Sciatic nerve (tissue), 2 donors: ENCODE measurements at regions of chr22 and their contacts with region 1.

Region 1: DNA sequence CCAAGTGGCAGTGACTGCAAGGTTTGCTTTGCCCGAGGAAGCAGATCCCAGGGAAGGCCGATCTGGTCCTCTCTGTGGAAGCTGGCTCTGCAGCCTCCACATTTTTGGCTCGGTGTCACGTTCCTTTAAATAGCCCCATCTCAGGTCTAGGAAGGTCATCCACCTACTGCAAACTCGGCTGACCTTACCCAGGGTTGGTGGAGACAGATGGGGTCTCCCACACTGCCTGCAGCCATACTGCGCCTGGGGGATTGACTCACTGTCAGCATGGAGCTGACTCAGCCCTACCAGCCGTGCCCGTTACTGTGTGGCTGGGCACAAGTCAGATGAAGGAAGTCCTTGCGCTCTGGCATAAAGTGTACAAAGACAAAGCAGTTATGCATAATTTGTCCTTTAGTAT is 16.9 kb downstream of the CDPF1 start:
- DNase-seq: no peak
- ATAC-seq: peak; percentile 79

Region 2: GRCh38 chr22:45358127-45358526 is 875.1 kb before region 1 on chr22:
- intact Hi-C with region 1: loop called (anchors 5 kb)
- DNase-seq: no peak
- ATAC-seq: no peak

Region 3: GRCh38 chr22:47011131-47011858 is 778.1 kb after region 1 on chr22:
- intact Hi-C with region 1: no loop called
- DNase-seq: peak; percentile 51
- ATAC-seq: no peak